K562 (cell line): ENCODE measurements at regions of chr6 and their contacts with region 1.

Region 1: GRCh38 chr6:27838058-27838944 is 73.9 kb downstream of the OR2B2 start:
- DNase-seq: peak; percentile 85 to 99 (median 92)
- ATAC-seq: peak; percentile 74
- H3K4me3 ChIP-seq: peak overlapping the region; percentile 56
- H3K27ac ChIP-seq: peak overlapping the region; percentile 88
- H3K4me1 ChIP-seq: peaks cover 12 to 13% of the 10 kb centered on the region in 2 experiments; a peak in 3 of 5 replicates
- H3K27me3 ChIP-seq: no peaks in the 10 kb centered on the region
- CTCF ChIP-seq: peak in 1 of 3 experiments; percentile 9; a peak in 1 of 6 replicates
- EP300 ChIP-seq: peak; percentile 35
- POLR2A ChIP-seq: peak; percentile 99
- RAD21 ChIP-seq: peak in 1 of 2 experiments; percentile 4; a peak in 1 of 4 replicates

Region 2: GRCh38 chr6:26122793-26123674 is 1715.3 kb before region 1 on chr6:
- CTCF ChIA-PET with region 1: no interaction called
- POLR2A ChIA-PET with region 1: no interaction called
- in situ Hi-C with region 1: loop called (anchors 10 kb)
- intact Hi-C with region 1: loop called (anchors 5 kb)
- DNase-seq: peak; percentile 79 to 99 (median 86)
- ATAC-seq: peak; percentile 62
- H3K4me3 ChIP-seq: peak overlapping the region; percentile 72
- H3K27ac ChIP-seq: peak overlapping the region; percentile 95
- H3K4me1 ChIP-seq: peaks cover 3 to 7% of the 10 kb centered on the region in 2 experiments; a peak in 4 of 5 replicates
- H3K27me3 ChIP-seq: no peaks in the 10 kb centered on the region
- CTCF ChIP-seq: peak in 1 of 3 experiments; percentile 23; a peak in 1 of 6 replicates
- EP300 ChIP-seq: peak; percentile 99
- POLR2A ChIP-seq: no peak; the same call in none of the 2 replicates
- RAD21 ChIP-seq: 0 out of 4 replicates have a peak, but pooled peaks of 1 of the 2 experiments have one; percentile 6

Region 3: DNA sequence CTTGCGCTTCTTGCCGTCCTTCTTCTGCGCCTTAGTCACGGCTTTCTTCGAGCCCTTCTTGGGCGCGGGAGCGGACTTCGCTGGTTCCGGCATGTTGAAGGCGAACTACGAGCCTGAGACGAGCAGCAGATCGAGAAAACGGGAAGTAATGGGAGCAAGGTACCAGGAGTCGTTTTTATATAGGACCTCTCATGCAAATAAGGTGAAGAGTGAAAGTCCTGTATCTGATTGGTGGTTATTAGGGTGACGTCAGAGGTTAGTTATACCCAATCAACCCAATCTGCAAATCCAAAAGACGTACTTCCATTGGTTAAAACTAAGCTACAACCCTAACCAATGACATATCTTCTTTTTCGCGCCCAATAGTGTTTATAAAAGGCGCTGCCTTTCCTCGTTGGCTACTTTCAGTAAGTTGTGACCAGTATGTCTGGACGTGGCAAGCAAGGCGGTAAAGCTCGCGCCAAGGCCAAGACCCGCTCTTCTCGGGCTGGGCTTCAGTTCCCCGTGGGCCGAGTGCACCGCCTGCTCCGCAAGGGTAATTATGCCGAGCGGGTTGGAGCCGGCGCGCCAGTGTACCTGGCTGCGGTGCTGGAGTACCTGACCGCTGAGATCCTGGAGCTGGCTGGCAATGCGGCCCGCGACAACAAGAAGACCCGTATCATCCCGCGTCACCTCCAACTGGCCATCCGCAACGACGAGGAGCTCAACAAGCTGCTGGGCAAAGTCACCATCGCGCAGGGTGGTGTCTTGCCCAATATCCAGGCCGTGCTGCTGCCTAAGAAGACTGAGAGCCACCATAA is 691.4 kb before region 1 on chr6:
- CTCF ChIA-PET with region 1: no interaction called
- POLR2A ChIA-PET with region 1: interaction called, 71 read pairs
- in situ Hi-C with region 1: no loop called
- intact Hi-C with region 1: no loop called
- DNase-seq: peak; percentile 93 to 99 (median 98)
- ATAC-seq: peak; percentile 68
- H3K4me3 ChIP-seq: peak overlapping the region; percentile 71
- H3K27ac ChIP-seq: peak overlapping the region; percentile 94
- H3K4me1 ChIP-seq: peaks cover 4 to 13% of the 10 kb centered on the region in 2 experiments
- H3K27me3 ChIP-seq: no peaks in the 10 kb centered on the region
- CTCF ChIP-seq: no peak
- EP300 ChIP-seq: no peak; the same call in 1 of the 2 replicates
- POLR2A ChIP-seq: peak; percentile 100
- RAD21 ChIP-seq: no peak; a peak in 1 of 4 replicates

Region 4: GRCh38 chr6:27720607-27721580 is 117.4 kb before region 1 on chr6:
- CTCF ChIA-PET with region 1: no interaction called
- POLR2A ChIA-PET with region 1: no interaction called
- in situ Hi-C with region 1: no loop called
- intact Hi-C with region 1: no loop called
- DNase-seq: peak; percentile 59 to 88 (median 69)
- ATAC-seq: peak; percentile 87
- H3K4me3 ChIP-seq: peak overlapping the region; percentile 31
- H3K27ac ChIP-seq: peak overlapping the region; percentile 28; the same call in 2 of the 3 replicates
- H3K4me1 ChIP-seq: peaks cover 0 to 12% of the 10 kb centered on the region in 2 experiments; a peak in 2 of 5 replicates
- H3K27me3 ChIP-seq: no peaks in the 10 kb centered on the region
- CTCF ChIP-seq: peak in 1 of 3 experiments; percentile 30; a peak in 2 of 6 replicates
- EP300 ChIP-seq: no peak
- POLR2A ChIP-seq: no peak
- RAD21 ChIP-seq: peak in 1 of 2 experiments; percentile 23; a peak in 2 of 4 replicates

Region 5: GRCh38 chr6:27809939-27810767 is 28.1 kb before region 1 on chr6:
- CTCF ChIA-PET with region 1: no interaction called
- POLR2A ChIA-PET with region 1: interaction called, 368 read pairs
- in situ Hi-C with region 1: no loop called
- intact Hi-C with region 1: loop called (anchors 1 kb)
- DNase-seq: peak; percentile 70 to 96 (median 82)
- ATAC-seq: peak; percentile 60
- H3K4me3 ChIP-seq: peak overlapping the region; percentile 71
- H3K27ac ChIP-seq: peak overlapping the region; percentile 86
- H3K4me1 ChIP-seq: peaks cover 4 to 20% of the 10 kb centered on the region in 2 experiments; a peak in 4 of 5 replicates
- H3K27me3 ChIP-seq: no peaks in the 10 kb centered on the region
- CTCF ChIP-seq: peak in 2 of 3 experiments; percentile 25 to 36; a peak in 3 of 6 replicates
- EP300 ChIP-seq: 0 out of 2 replicates have a peak, but pooled peaks have one; percentile 2
- POLR2A ChIP-seq: peak; percentile 100
- RAD21 ChIP-seq: peak; percentile 10 to 35; a peak in 2 of 4 replicates

Region 6: GRCh38 chr6:27864906-27865849 is 26.9 kb after region 1 on chr6:
- CTCF ChIA-PET with region 1: no interaction called
- POLR2A ChIA-PET with region 1: interaction called, 241 read pairs
- in situ Hi-C with region 1: no loop called
- intact Hi-C with region 1: loop called (anchors 2 kb)
- DNase-seq: peak; percentile 38 to 84 (median 68)
- ATAC-seq: peak; percentile 49
- H3K4me3 ChIP-seq: peak overlapping the region; percentile 45
- H3K27ac ChIP-seq: peak overlapping the region; percentile 73
- H3K4me1 ChIP-seq: peaks cover 15 to 16% of the 10 kb centered on the region in 2 experiments; a peak in 4 of 5 replicates
- H3K27me3 ChIP-seq: no peaks in the 10 kb centered on the region
- CTCF ChIP-seq: no peak
- EP300 ChIP-seq: no peak
- POLR2A ChIP-seq: peak; percentile 96
- RAD21 ChIP-seq: no peak

Region 7: DNA sequence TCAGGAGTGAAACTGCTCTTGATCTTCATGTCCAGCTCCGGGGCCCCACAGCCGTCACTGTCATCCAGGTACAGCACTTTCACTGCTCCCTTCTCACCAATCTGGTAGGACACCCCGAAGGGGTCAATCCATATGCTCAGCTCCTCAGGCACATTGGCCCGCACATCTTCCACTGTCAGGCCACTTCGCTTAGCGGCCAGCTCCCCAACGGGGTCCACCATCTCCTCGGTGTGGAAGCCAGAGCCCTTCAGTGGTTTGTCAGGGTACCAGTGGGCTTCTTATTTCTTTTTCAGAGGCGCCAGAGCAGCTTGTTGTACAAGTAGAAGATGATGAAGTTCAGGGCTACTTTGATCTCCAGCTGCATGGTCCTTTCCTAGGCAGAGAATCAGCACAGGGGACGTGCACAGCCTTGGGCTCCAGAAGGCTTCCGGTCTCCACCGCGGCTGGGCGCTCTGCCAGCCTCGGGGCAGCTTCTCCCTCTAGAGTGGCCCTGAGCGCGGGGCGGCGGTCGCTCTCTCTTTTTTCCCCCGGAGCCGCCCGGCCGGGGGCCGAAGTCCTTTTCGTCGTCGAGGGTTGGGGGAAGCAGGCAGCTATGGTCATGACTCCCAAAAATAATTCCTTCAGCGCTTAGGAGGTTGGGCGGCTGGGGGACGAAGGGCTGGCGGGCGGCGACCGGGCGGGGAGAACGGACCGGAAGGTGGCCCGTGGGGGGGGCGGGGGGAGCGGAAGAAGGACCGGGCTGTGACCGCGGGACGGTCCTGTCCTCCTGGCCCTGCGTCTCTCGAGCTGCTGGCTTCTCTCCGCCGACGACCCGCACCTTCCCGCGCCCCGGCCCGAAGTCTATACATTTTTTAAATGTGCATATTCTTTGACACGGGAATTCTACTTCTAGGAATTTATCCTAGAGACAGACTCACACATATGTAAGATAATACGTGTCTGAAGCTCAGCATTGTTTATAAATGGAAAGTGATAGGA is 380.3 kb after region 1 on chr6:
- CTCF ChIA-PET with region 1: no interaction called
- POLR2A ChIA-PET with region 1: interaction called, 7 read pairs
- in situ Hi-C with region 1: no loop called
- intact Hi-C with region 1: loop called (anchors 10 kb)
- DNase-seq: peak; percentile 89 to 95 (median 92)
- ATAC-seq: peak; percentile 84
- H3K4me3 ChIP-seq: peak overlapping the region; percentile 62
- H3K27ac ChIP-seq: peak overlapping the region; percentile 81
- H3K4me1 ChIP-seq: peaks cover 33 to 44% of the 10 kb centered on the region in 2 experiments
- H3K27me3 ChIP-seq: no peaks in the 10 kb centered on the region
- CTCF ChIP-seq: peak in 2 of 3 experiments; percentile 13 to 32; a peak in 1 of 6 replicates
- EP300 ChIP-seq: peak; percentile 36; the same call in 1 of the 2 replicates
- POLR2A ChIP-seq: peak; percentile 82
- RAD21 ChIP-seq: no peak; a peak in 1 of 4 replicates